Activated T-helper 1 cell treated with anti-CD3 and anti-CD28 coated beads, Interleukin-12 subunit alpha, Interleukin-12 subunit beta, Interleukin-2, Interleukin-4 antibody, amounts not matched to agents 30 ng/mL and 10 ng/mL and 1 ng/mL, durations not matched to agents 14 hours and 24 hours and 36 hours (primary cell): ENCODE measurements at regions of chr11 and their contacts with region 1.

Region 1: GRCh38 chr11:10933455-10934292 is 75.8 kb upstream of the ZBED5 start:
- DNase-seq: peak; percentile 61
- H3K4me3 Mint-ChIP-seq: peak overlapping the region; percentile 76
- H3K27ac Mint-ChIP-seq: peak overlapping the region; percentile 65
- H3K4me1 Mint-ChIP-seq: peaks cover 22% of the 10 kb centered on the region
- H3K27me3 Mint-ChIP-seq: peaks cover 64% of the 10 kb centered on the region

Region 2: GRCh38 chr11:10808553-10809372 is 124.9 kb before region 1 on chr11 and contains the start of gene EIF4G2:
- intact Hi-C with region 1: loop called (anchors 2 kb)
- DNase-seq: peak; percentile 98
- H3K4me3 Mint-ChIP-seq: peak within 1 kb of the TSS; percentile 95
- H3K27ac Mint-ChIP-seq: peak within 1 kb of the TSS; percentile 98
- H3K4me1 Mint-ChIP-seq: peaks cover 43% of the 10 kb centered on the region
- H3K27me3 Mint-ChIP-seq: no peaks in the 10 kb centered on the region
- total RNA-seq, gene EIF4G2: 1,084 and 1,108 TPM in 2 replicates

Region 3: GRCh38 chr11:10878408-10879214 is 55.1 kb before region 1 on chr11:
- intact Hi-C with region 1: loop called (anchors 5 kb)
- DNase-seq: peak; percentile 17
- H3K4me3 Mint-ChIP-seq: no peak overlapping the region
- H3K27ac Mint-ChIP-seq: no peak overlapping the region
- H3K4me1 Mint-ChIP-seq: peaks cover 7% of the 10 kb centered on the region
- H3K27me3 Mint-ChIP-seq: no peaks in the 10 kb centered on the region

Region 4: DNA sequence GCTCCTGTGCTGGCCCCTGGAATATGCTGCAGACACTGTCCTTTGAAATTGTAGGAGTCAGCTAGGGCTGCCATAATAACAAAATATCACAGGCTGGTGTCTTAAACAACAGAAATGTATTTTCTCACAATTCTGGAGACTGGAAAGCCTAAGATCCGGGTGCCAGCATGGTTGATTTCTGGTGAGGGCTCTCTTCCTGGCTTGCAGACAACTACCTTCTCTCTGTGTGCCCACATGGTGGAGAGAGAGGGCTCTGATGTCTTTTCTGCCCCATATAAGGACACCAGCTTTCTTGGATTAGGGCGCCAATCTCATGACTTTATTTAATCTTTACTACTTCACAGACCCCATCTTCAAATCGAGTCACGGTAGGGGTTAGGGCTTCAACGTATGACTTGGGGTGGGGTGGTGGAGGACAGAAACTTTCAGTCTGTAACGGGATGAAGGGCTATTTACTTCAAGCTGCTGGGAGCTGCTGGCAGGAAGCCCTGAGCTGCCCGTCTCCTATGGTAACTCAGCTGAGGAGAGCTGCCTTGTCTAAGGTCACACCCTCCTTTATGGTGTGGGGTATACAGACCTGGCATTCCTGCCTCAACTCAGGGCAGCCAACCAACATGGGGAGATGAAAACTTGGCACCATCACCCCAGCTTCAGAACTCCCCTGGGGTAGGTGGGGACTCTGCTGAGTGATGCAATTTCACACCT is 67.1 kb after region 1 on chr11:
- intact Hi-C with region 1: no loop called
- DNase-seq: no peak
- H3K4me3 Mint-ChIP-seq: no peak overlapping the region
- H3K27ac Mint-ChIP-seq: no peak overlapping the region
- H3K4me1 Mint-ChIP-seq: no peaks in the 10 kb centered on the region
- H3K27me3 Mint-ChIP-seq: peaks cover 21% of the 10 kb centered on the region

Region 5: DNA sequence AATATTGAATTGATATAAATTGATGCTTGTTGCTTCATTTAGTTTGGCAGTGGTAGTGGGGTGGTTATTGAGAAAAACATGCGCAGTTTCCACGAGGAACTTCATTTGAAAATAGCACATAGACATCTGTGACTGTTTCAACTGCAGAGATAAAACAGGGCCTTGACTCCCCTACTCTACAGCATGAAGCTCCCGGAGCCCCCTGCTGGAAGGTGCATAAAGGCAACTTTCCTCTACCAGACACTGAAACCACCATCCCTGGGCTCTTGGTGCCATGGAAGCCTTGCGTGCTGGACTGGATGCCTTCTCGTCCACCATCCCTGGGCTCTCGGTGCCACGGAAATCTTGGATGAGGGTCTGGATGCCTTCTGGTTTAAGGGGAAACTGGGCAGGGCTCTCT is 223.5 kb after region 1 on chr11:
- intact Hi-C with region 1: loop called (anchors 1 kb)
- DNase-seq: peak; percentile 12
- H3K4me3 Mint-ChIP-seq: no peak overlapping the region
- H3K27ac Mint-ChIP-seq: no peak overlapping the region
- H3K4me1 Mint-ChIP-seq: peaks cover 23% of the 10 kb centered on the region
- H3K27me3 Mint-ChIP-seq: peaks cover 6% of the 10 kb centered on the region

Region 6: GRCh38 chr11:11621573-11622319 is 688.1 kb after region 1 on chr11 and contains the start of gene GALNT18:
- intact Hi-C with region 1: loop called (anchors 10 kb)
- DNase-seq: peak; percentile 82
- H3K4me3 Mint-ChIP-seq: peak within 1 kb of the TSS; percentile 87
- H3K27ac Mint-ChIP-seq: no peak within 1 kb of the TSS
- H3K4me1 Mint-ChIP-seq: peaks cover 3% of the 10 kb centered on the region
- H3K27me3 Mint-ChIP-seq: peaks cover 45% of the 10 kb centered on the region
- total RNA-seq, gene GALNT18: 5.3 and 5.7 TPM in 2 replicates